ENCODE measurements at regions of chr1 and their contacts with region 1.

Region 1: GRCh38 chr1:31576201-31576669 is at the start of gene TINAGL1:
- DNase-seq: peak; percentile 69 to 78
- ATAC-seq: peak; percentile 57 to 80 (median 69)
- H3K4me3 ChIP-seq: peak within 1 kb of the TSS; percentile 70 to 98 (median 91)
- H3K27ac ChIP-seq: peak within 1 kb of the TSS; percentile 89 to 99 (median 97)
- H3K4me1 ChIP-seq: peaks cover 34 to 66% (median 62%) of the 10 kb centered on the region in 9 donors
- H3K27me3 ChIP-seq: peaks cover 0 to 14% (median 0%) of the 10 kb centered on the region in 7 donors
- CTCF ChIP-seq: peak in 2 of 9 donors; percentile 4 to 11
- total RNA-seq, gene TINAGL1: 139 to 336 (median 188) TPM

Region 2: DNA sequence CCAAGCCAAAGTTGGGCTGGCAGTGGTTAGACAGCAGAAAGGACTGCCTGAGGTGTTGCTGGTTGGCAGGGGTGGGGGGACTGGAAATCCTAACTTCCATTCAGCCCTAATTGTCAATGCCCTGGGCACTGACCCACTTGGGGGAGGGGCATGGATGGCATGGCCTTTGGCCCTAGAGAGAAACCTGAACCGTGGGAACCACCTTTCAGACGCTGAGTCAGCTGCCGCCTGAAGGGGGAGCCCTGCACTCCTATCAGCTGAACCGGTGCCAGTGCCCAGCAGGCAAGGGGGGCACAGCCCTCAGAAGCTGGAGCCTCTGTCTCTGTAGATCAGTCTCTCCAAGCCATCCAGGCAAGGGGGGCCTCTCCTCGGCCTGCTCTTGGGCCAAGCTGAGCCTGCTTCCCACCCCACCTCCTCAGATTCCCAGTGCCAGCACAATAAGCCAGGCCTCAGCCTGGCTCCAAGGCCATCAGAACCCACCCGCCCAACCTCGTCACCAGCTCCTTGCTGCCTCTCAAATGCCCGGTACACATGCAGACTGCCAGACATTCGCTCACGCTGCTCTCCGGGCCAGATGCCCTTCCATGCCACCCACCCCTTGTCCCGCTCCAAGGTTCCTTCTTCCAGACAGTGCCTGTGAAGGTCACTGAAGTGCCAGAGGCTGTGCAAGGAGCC is 11.6 kb after region 1 on chr1:
- intact Hi-C with region 1: loop called in 1 of 10 experiments (anchors 1 kb)
- DNase-seq: peak; percentile 73 to 75
- ATAC-seq: peak; percentile 5 to 63 (median 48)
- H3K4me3 ChIP-seq: peak overlapping the region in 3 of 10 donors; percentile 45 to 46 (median 46)
- H3K27ac ChIP-seq: peak overlapping the region; percentile 82 to 96 (median 94)
- H3K4me1 ChIP-seq: peaks cover 30 to 86% (median 70%) of the 10 kb centered on the region in 9 donors
- H3K27me3 ChIP-seq: peaks cover 0 to 13% (median 0%) of the 10 kb centered on the region in 7 donors
- CTCF ChIP-seq: peak; percentile 23 to 76 (median 65)

Region 3: DNA sequence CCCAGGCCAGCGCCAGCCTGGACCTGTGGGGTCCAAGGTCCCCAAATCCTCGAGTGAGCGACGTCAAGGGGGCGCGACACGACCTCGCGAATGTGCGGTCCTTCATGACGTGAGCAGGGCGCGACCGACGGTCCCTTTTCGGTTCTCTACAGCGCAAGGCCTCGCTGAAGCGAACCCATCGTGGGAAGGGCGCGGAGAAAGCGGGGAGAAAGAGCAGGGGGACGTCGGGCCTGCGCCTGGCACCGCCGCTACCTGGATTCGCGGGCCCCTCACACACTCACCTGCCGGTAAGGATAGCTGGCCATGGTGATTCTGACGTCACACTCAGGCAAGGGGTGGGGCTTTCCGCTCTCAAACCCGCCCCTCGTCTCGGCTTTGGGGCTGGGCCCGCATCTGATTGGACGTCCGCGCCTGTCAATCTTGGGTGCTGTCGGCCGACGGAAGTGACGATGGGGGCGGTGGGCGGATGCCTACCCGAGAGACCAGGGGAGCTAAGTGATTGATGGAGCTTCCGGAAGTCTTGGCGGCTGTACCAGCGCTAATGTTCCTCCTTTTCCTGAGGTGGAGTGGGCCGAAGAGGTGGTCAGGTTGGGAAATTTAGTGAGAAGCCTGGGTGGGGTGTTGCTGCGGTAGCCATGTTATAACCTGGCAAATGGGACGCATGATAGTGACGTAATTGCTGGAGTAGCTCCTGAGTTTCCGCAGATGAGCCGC is 68.5 kb after region 1 on chr1 and contains the start of gene PEF1:
- intact Hi-C with region 1: loop called in 1 of 10 experiments (anchors 5 kb)
- DNase-seq: peak; percentile 99
- ATAC-seq: peak; percentile 94 to 97 (median 96)
- H3K4me3 ChIP-seq: peak within 1 kb of the TSS; percentile 64 to 100 (median 87)
- H3K27ac ChIP-seq: peak within 1 kb of the TSS; percentile 92 to 100 (median 98)
- H3K4me1 ChIP-seq: peaks cover 22 to 87% (median 65%) of the 10 kb centered on the region in 9 donors
- H3K27me3 ChIP-seq: no peaks in the 10 kb centered on the region
- CTCF ChIP-seq: no peak
- total RNA-seq, gene PEF1: 35.0 to 47.9 (median 40.0) TPM

Region 4: GRCh38 chr1:31715087-31715872 is 139.0 kb after region 1 on chr1:
- intact Hi-C with region 1: no loop called
- DNase-seq: peak; percentile 96
- ATAC-seq: peak; percentile 95 to 98 (median 96)
- H3K4me3 ChIP-seq: peak overlapping the region; percentile 31 to 65 (median 50)
- H3K27ac ChIP-seq: peak overlapping the region; percentile 90 to 99 (median 92)
- H3K4me1 ChIP-seq: peaks cover 10 to 45% (median 29%) of the 10 kb centered on the region in 9 donors
- H3K27me3 ChIP-seq: peaks cover 0 to 28% (median 0%) of the 10 kb centered on the region in 7 donors
- CTCF ChIP-seq: peak; percentile 79 to 98 (median 92)

Region 5: DNA sequence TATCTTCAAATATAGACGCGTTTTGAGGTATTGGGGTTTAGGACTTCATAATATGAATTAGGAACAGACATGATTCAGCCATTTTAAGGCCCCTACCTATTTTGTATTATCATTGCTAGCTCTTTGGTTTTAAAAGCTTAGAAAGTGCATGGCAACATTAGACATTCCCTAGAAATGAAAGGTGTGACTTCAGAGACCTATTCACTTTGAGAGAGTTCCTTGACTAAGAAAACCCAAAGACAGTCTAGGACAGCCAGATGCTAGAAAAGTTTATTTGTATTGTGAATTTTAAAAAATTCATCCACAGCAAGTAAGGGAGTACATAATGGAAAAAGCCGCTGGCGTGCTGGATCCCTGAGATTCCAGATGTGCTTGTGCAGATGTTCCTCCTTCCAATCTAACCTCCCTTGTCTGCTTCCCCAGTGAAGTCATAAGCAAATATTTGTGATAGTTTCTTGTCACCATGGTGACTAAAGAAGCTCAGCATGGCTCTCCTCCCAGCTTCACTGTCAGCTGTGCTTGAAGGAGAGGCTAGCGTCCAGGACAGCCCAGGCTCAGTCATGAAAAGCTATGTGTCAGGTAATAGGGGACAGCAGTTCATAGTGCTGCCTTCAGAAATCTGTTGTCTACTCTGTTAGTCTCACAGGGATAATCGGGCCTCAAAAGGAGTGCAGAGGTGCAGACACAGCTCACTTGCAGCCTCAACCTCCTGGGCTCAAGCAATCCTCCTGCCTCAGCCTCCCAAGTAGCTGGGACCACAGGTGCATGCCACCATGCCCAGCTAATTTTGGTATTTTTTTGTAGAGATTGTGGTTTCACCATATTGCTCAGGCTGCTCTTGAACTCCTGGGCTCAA is 566.4 kb after region 1 on chr1:
- intact Hi-C with region 1: no loop called
- DNase-seq: peak; percentile 36 to 71
- ATAC-seq: peak; percentile 88 to 95 (median 94)
- H3K4me3 ChIP-seq: no peak overlapping the region
- H3K27ac ChIP-seq: peak overlapping the region in 8 of 10 donors; percentile 23 to 79 (median 56)
- H3K4me1 ChIP-seq: peaks cover 0 to 45% (median 24%) of the 10 kb centered on the region in 9 donors
- H3K27me3 ChIP-seq: no peaks in the 10 kb centered on the region
- CTCF ChIP-seq: no peak

Measured in heart right ventricle (tissue), 16 donors.